Kidney (tissue), 22 donors: ENCODE measurements at regions of chr15 and their contacts with region 1.

Region 1: GRCh38 chr15:64905119-64905831 is 6.4 kb upstream of the ANKDD1A start:
- DNase-seq: peak; percentile 84 to 89 (median 88)
- H3K4me3 ChIP-seq: peak overlapping the region; percentile 17 to 69 (median 62)
- H3K27ac ChIP-seq: no peak overlapping the region
- H3K4me1 ChIP-seq: peaks cover 0 to 6% (median 0%) of the 10 kb centered on the region in 3 donors
- H3K27me3 ChIP-seq: no peaks in the 10 kb centered on the region
- CTCF ChIP-seq: peak; percentile 82

Region 2: DNA sequence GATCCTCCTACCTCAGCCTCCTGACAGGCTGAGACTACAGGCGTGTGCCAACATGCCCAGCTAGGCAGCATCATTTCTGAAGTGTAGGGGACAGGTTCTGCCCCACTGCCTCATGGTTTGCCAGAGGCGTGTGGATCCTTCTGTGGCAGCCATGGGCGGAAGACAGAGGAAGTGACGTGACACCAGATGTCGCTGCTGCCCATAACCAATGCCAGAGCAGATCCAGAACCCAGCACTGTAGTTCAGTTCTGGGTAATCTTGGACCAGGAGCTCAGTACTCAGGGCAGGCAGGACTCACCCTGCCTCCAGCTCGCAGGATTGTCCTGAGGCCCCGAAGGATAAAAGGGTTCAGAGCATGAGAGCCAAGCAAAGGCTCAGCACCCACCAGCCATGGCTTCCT is 138.1 kb before region 1 on chr15:
- intact Hi-C with region 1: no loop called
- DNase-seq: no peak
- H3K4me3 ChIP-seq: no peak overlapping the region
- H3K27ac ChIP-seq: no peak overlapping the region
- H3K4me1 ChIP-seq: peaks cover 0 to 8% (median 6%) of the 10 kb centered on the region in 3 donors
- H3K27me3 ChIP-seq: no peaks in the 10 kb centered on the region
- CTCF ChIP-seq: no peak

Region 3: GRCh38 chr15:64841258-64842095 is 63.8 kb before region 1 on chr15 and contains the start of gene PLEKHO2:
- intact Hi-C with region 1: loop called (anchors 10 kb)
- DNase-seq: peak; percentile 98 to 100 (median 99)
- H3K4me3 ChIP-seq: peak within 1 kb of the TSS; percentile 81 to 94 (median 83)
- H3K27ac ChIP-seq: peak within 1 kb of the TSS; percentile 88 to 95
- H3K4me1 ChIP-seq: peaks cover 0 to 29% (median 23%) of the 10 kb centered on the region in 3 donors
- H3K27me3 ChIP-seq: no peaks in the 10 kb centered on the region
- CTCF ChIP-seq: no peak
- total RNA-seq, gene PLEKHO2: 48.6 TPM

Region 4: GRCh38 chr15:65077981-65078352 is 172.7 kb after region 1 on chr15:
- intact Hi-C with region 1: no loop called
- DNase-seq: peak; percentile 78 to 85 (median 82)
- H3K4me3 ChIP-seq: no peak overlapping the region
- H3K27ac ChIP-seq: no peak overlapping the region
- H3K4me1 ChIP-seq: peaks cover 0 to 7% (median 0%) of the 10 kb centered on the region in 3 donors
- H3K27me3 ChIP-seq: no peaks in the 10 kb centered on the region
- CTCF ChIP-seq: peak; percentile 72